Activated T-helper 2 cell treated with anti-CD3 and anti-CD28 coated beads, Interferon-gamma antibody, Interleukin-2, Interleukin-4, amounts not matched to agents 10 μg/mL and 5 μg/mL and 100 μg/mL, durations not matched to agents 14 hours and 24 hours and 36 hours (primary cell): ENCODE measurements at regions of chr19 and their contacts with region 1.

Region 1: GRCh38 chr19:47284324-47284899 is 9.7 kb downstream of the INAFM1 start:
- DNase-seq: no peak
- H3K4me3 Mint-ChIP-seq: no peak overlapping the region
- H3K27ac Mint-ChIP-seq: no peak overlapping the region
- H3K4me1 Mint-ChIP-seq: peaks cover 5% of the 10 kb centered on the region
- H3K27me3 Mint-ChIP-seq: no peaks in the 10 kb centered on the region

Region 2: GRCh38 chr19:47305309-47305751 is 20.9 kb after region 1 on chr19:
- intact Hi-C with region 1: no loop called
- DNase-seq: peak; percentile 22
- H3K4me3 Mint-ChIP-seq: no peak overlapping the region
- H3K27ac Mint-ChIP-seq: no peak overlapping the region
- H3K4me1 Mint-ChIP-seq: peaks cover 7% of the 10 kb centered on the region
- H3K27me3 Mint-ChIP-seq: peaks cover 9% of the 10 kb centered on the region

Region 3: DNA sequence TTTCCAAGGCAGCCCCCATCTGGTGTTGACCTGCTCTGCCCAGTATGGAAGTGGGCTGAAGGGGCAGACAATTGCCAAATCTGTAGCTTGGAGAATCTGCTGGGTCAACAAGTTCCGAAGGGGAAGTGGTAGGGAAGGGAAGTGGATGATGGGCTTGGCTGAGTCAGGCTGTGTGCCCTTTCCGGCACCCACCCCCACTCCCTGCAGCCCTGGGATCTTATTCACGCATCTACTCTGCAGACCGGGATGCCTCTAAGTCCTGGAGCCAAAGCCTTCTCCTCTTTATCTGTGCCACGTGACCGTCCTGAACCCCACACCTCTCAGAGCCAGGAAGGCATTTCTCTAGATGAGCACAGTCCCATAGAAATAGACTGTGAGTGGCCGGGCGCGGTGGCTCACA is 40.1 kb after region 1 on chr19:
- intact Hi-C with region 1: no loop called
- DNase-seq: no peak
- H3K4me3 Mint-ChIP-seq: no peak overlapping the region
- H3K27ac Mint-ChIP-seq: no peak overlapping the region
- H3K4me1 Mint-ChIP-seq: no peaks in the 10 kb centered on the region
- H3K27me3 Mint-ChIP-seq: peaks cover 3% of the 10 kb centered on the region

Region 4: DNA sequence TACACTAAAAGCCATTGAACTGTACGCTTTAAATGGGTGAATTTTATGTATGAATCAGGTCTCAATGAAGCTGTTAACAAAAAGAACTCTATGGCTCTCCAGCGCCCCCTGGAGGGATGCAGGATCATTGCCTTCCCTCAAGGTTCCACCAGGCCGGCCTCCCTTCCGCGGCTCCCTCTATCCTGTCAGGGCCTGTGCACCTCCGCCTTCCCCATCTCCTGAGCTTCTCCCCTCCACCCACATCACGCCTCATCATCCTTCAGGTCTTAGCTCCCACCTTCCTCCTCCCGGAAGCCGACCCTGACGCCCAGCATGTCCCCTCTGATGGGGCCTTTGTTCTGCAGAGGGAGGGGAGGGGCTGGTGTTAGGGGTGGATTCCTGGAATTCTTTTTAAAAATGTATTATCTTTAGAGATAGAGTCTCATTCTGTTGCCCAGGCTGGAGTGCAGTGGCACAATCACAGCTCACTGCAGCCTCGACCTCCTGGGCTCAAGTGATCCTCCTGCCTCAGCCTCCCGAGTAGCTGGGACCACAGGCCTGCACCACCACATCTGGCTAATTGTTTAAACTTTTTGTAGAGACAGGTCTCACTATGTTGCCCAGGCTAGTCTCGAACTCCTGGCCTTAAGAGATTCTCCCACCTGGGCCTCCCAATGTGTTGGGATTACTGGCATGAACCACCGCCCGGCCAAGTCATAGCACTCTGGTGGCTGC is 107.3 kb after region 1 on chr19:
- intact Hi-C with region 1: loop called (anchors 5 kb)
- DNase-seq: peak; percentile 70
- H3K4me3 Mint-ChIP-seq: no peak overlapping the region
- H3K27ac Mint-ChIP-seq: no peak overlapping the region
- H3K4me1 Mint-ChIP-seq: no peaks in the 10 kb centered on the region
- H3K27me3 Mint-ChIP-seq: peaks cover 5% of the 10 kb centered on the region

Region 5: DNA sequence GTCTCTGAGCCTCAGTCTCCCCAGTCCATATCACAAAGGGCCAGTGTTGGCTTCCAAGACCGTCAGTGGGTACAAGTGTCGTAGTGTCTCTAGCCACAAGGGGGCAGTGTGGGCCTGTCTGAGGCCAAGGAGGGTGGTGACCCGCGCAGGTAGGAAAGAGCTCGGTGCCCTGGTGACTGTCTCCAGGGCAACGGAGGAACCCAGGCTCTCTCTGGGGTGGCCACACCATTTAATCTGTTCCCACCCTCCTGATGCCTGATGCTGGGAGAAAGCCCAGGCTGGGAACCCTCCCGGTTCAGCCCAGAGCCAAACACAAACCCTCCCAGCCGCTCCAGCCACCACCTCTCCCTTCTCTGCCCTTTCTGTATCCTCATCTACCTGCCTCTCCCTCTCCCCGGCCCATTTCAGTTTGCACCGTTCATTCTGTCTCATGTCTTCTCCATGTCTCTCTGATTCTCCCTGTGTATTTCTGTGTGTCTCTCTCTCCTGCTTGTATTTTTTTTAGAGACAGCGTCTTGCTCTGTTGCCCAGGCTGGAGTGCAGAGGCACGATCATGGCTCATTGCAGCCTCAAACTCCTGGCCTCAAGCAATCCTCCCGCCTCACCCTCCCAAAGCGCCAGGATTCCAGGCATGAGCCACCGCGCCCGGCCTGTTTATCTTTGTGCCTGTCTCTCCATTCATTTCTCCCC is 152.4 kb after region 1 on chr19:
- intact Hi-C with region 1: no loop called
- DNase-seq: peak; percentile 69
- H3K4me3 Mint-ChIP-seq: no peak overlapping the region
- H3K27ac Mint-ChIP-seq: no peak overlapping the region
- H3K4me1 Mint-ChIP-seq: peaks cover 19% of the 10 kb centered on the region
- H3K27me3 Mint-ChIP-seq: peaks cover 15% of the 10 kb centered on the region